CD4-positive, alpha-beta memory T cell (primary cell): ENCODE measurements at regions of chr9 and their contacts with region 1.

Region 1: GRCh38 chr9:137423004-137423874 is at the starts of genes EXD3 and NOXA1:
- DNase-seq: peak; percentile 89 to 93 (median 91)
- H3K4me3 ChIP-seq: peak within 1 kb of the TSS; percentile 57
- H3K4me3 Mint-ChIP-seq: peak within 1 kb of the TSS; percentile 82 to 87 (median 85)
- H3K27ac ChIP-seq: peak within 1 kb of the TSS; percentile 43
- H3K27ac Mint-ChIP-seq: peak within 1 kb of the TSS; percentile 37 to 87 (median 73)
- H3K4me1 ChIP-seq: peaks cover 24% of the 10 kb centered on the region
- H3K4me1 Mint-ChIP-seq: peaks cover 5 to 21% (median 9%) of the 10 kb centered on the region in 4 donors
- H3K27me3 ChIP-seq: no peaks in the 10 kb centered on the region
- H3K27me3 Mint-ChIP-seq: no peaks in the 10 kb centered on the region
- total RNA-seq, gene EXD3: 21.4 to 21.9 TPM
- total RNA-seq, gene NOXA1: 4.5 to 5.6 TPM

Region 2: GRCh38 chr9:137411671-137412380 is 11.4 kb before region 1 on chr9:
- CTCF ChIA-PET with region 1: no interaction called
- POLR2A ChIA-PET with region 1: interaction called, 12 read pairs
- intact Hi-C with region 1: no loop called
- DNase-seq: peak in 1 of 5 donors; percentile 59
- H3K4me3 ChIP-seq: no peak overlapping the region
- H3K4me3 Mint-ChIP-seq: no peak overlapping the region
- H3K27ac ChIP-seq: no peak overlapping the region
- H3K27ac Mint-ChIP-seq: no peak overlapping the region
- H3K4me1 ChIP-seq: peaks cover 19% of the 10 kb centered on the region
- H3K4me1 Mint-ChIP-seq: peaks cover 2 to 11% (median 4%) of the 10 kb centered on the region in 4 donors
- H3K27me3 ChIP-seq: no peaks in the 10 kb centered on the region
- H3K27me3 Mint-ChIP-seq: no peaks in the 10 kb centered on the region

Region 3: DNA sequence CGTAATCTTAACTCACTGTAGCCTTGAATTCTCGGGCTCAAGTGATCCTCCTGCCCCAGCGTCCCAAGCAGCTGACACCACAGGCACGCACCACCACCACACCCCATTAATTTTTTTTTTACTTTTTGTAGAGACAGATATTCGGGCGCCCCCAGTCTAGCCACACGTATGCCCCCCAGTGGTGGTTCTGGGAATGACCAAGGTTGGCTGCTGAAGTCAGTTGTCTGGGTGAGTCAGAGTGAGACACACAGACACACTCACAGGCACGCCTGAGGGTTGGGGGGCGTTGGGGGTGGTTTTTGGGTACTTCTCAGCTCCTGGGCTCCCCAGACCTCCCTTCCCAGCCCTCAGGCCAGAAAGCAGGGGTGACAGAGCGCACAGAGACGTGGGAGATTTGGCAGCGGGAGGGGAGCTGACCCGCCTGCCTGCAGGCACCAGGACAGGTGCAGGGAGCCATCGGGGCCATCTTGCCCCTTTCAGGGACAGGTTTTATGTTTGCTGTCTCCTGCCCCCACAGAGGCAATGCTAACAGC is 22.1 kb after region 1 on chr9:
- CTCF ChIA-PET with region 1: interaction called, 6 read pairs
- POLR2A ChIA-PET with region 1: interaction called, 7 read pairs
- intact Hi-C with region 1: loop called (anchors 1 kb)
- DNase-seq: peak; percentile 74 to 87 (median 80)
- H3K4me3 ChIP-seq: no peak overlapping the region
- H3K4me3 Mint-ChIP-seq: peak overlapping the region in 2 of 8 donors; percentile 56 to 57
- H3K27ac ChIP-seq: no peak overlapping the region
- H3K27ac Mint-ChIP-seq: peak overlapping the region in 4 of 7 donors; percentile 16 to 79 (median 76)
- H3K4me1 ChIP-seq: peaks cover 22% of the 10 kb centered on the region
- H3K4me1 Mint-ChIP-seq: peaks cover 11 to 30% (median 20%) of the 10 kb centered on the region in 4 donors
- H3K27me3 ChIP-seq: no peaks in the 10 kb centered on the region
- H3K27me3 Mint-ChIP-seq: peaks cover 2 to 4% of the 10 kb centered on the region in 2 donors

Region 4: GRCh38 chr9:137459147-137459600 is 35.9 kb after region 1 on chr9 and contains the start of gene NSMF:
- CTCF ChIA-PET with region 1: interaction called, 3 read pairs
- POLR2A ChIA-PET with region 1: interaction called, 14 read pairs
- intact Hi-C with region 1: loop called (anchors 5 kb)
- DNase-seq: peak; percentile 89 to 97 (median 94)
- H3K4me3 ChIP-seq: peak within 1 kb of the TSS; percentile 36 to 46
- H3K4me3 Mint-ChIP-seq: peak within 1 kb of the TSS in 7 of 8 donors; percentile 47 to 69 (median 57)
- H3K27ac ChIP-seq: peak within 1 kb of the TSS; percentile 57
- H3K27ac Mint-ChIP-seq: peak within 1 kb of the TSS; percentile 82 to 94 (median 87)
- H3K4me1 ChIP-seq: peaks cover 56% of the 10 kb centered on the region
- H3K4me1 Mint-ChIP-seq: peaks cover 5 to 31% (median 17%) of the 10 kb centered on the region in 4 donors
- H3K27me3 ChIP-seq: no peaks in the 10 kb centered on the region
- H3K27me3 Mint-ChIP-seq: no peaks in the 10 kb centered on the region
- total RNA-seq, gene NSMF: 18.3 to 20.9 TPM